Keratinocyte (primary cell): ENCODE measurements at regions of chr19 and their contacts with region 1.

Region 1: GRCh38 chr19:31058676-31059396 is 290.4 kb downstream of the TSHZ3 start:
- DNase-seq: no peak
- H3K4me3 ChIP-seq: no peak overlapping the region
- H3K27ac ChIP-seq: no peak overlapping the region
- H3K4me1 ChIP-seq: no peaks in the 10 kb centered on the region
- H3K27me3 ChIP-seq: no peaks in the 10 kb centered on the region
- CTCF ChIP-seq: no peak

Region 2: DNA sequence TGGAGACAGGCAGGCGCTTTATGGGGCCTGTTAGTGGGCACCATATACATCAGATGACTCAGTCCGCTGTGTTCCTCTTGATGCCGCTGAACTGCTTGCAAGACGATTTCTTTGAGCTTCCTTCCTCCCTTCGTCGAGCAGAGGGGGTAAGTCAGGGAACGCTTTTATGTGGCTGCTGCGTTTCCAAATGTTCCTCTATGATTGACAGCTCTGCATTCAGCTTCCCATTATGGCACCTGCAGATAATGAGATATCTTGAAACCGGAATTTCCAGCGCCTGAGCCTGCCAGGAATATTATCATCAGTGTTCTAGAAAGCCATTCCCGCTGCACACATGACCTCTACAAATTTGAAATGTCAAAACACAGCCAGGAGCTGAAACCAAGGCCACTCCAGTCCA is 33.4 kb after region 1 on chr19:
- dilution Hi-C with region 1: loop called (anchors 5 kb)
- DNase-seq: no peak
- H3K4me3 ChIP-seq: no peak overlapping the region
- H3K27ac ChIP-seq: no peak overlapping the region
- H3K4me1 ChIP-seq: no peaks in the 10 kb centered on the region
- H3K27me3 ChIP-seq: no peaks in the 10 kb centered on the region
- CTCF ChIP-seq: no peak